Transverse colon (tissue), 4 donors: ENCODE measurements at regions of chrX and their contacts with region 1.

Region 1: DNA sequence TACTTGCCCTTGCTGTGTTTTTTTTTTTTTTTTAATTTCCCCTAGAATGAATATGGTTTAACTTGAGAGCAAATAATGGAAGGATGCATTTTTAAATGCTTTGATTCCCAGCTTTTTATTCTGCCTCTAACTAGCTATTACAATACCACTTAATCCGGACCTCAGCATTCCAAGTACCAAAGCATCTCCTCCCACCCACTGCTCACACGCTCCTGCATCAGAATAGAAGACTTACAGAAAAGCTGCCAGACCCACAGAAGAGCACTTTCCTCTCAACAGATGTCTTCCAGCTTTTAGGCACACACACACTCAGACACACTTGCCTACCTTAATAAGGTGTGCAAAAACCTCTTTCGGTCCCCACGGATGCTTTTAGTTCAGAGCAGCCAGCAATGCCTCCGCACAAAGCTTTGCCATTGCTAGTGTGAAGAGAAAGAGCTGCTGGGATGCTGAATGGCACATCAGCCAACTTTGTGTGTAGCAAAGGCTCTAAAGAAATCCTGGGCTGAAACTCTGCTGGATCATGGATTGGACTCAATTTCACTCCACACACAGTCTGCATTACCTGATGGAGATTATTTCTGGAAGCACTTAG is 1056.2 kb downstream of the DMD start:
- DNase-seq: no peak
- H3K4me3 ChIP-seq: no peak overlapping the region
- H3K27ac ChIP-seq: no peak overlapping the region
- H3K4me1 ChIP-seq: no peaks in the 10 kb centered on the region
- H3K27me3 ChIP-seq: no peaks in the 10 kb centered on the region
- CTCF ChIP-seq: no peak
- EP300 ChIP-seq: no peak
- POLR2A ChIP-seq: no peak

Region 2: DNA sequence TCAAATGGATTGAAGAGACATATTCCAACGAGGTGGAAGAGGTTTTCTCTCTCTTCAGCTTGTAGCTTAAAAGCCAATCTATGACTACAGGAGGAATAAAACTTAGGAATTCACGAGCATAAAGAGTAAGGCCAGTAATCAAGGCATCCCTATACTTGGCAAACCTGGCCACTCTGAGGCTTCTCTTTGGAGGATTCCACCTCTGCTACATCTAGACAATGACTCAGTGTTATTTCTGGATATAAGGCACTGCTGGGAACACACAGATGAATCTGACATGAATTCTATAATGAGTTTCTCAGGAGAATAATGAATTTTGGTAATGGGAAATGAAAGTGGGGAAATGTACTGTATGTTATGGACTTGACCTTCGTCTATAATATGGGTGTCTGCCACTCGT is 67.5 kb before region 1 on chrX:
- in situ Hi-C with region 1: loop called in 1 of 4 experiments (anchors 10 kb)
- intact Hi-C with region 1: no loop called
- DNase-seq: no peak
- H3K4me3 ChIP-seq: no peak overlapping the region
- H3K27ac ChIP-seq: no peak overlapping the region
- H3K4me1 ChIP-seq: no peaks in the 10 kb centered on the region
- H3K27me3 ChIP-seq: no peaks in the 10 kb centered on the region
- CTCF ChIP-seq: no peak
- EP300 ChIP-seq: no peak
- POLR2A ChIP-seq: no peak

Region 3: DNA sequence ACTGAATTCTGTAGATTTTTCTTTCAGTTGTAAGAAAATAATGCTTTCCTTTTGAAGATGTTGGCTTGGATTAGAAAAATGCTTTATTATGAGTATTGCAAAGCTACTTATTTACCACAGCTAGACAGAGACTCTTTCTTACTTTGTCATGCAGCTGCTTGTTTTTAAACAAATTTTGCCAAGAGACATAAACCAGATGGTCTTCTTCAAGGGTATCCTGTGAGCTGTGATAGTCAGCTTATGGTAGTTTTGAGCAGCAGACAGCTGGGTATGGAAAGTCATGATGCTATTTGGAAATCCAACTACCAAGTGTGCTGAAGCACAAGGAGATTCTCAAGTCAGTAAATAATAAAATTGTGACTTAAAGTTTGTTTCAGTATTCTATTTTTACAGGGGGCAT is 114.7 kb after region 1 on chrX:
- in situ Hi-C with region 1: loop called in 1 of 4 experiments (anchors 25 kb)
- intact Hi-C with region 1: no loop called
- DNase-seq: no peak
- H3K4me3 ChIP-seq: no peak overlapping the region
- H3K27ac ChIP-seq: no peak overlapping the region
- H3K4me1 ChIP-seq: peaks cover 0 to 13% (median 3%) of the 10 kb centered on the region in 4 donors
- H3K27me3 ChIP-seq: no peaks in the 10 kb centered on the region
- CTCF ChIP-seq: no peak
- EP300 ChIP-seq: no peak
- POLR2A ChIP-seq: no peak